ENCODE measurements at regions of chr10 and their contacts with region 1.

Region 1: GRCh38 chr10:67772894-67773511 is 65.0 kb downstream of the DNAJC12 start:
- DNase-seq: peak; percentile 19 to 85 (median 75)
- H3K4me3 ChIP-seq: no peak overlapping the region
- H3K27ac ChIP-seq: no peak overlapping the region
- H3K4me1 ChIP-seq: peaks cover 0 to 14% (median 2%) of the 10 kb centered on the region in 4 experiments
- H3K27me3 ChIP-seq: no peaks in the 10 kb centered on the region

Region 2: GRCh38 chr10:67697724-67698131 is 75.3 kb before region 1 on chr10:
- CTCF ChIA-PET with region 1: interaction called, 124 read pairs
- POLR2A ChIA-PET with region 1: no interaction called
- DNase-seq: peak; percentile 56 to 73 (median 70)
- H3K4me3 ChIP-seq: peak overlapping the region in 1 of 7 experiments; percentile 33
- H3K27ac ChIP-seq: no peak overlapping the region
- H3K4me1 ChIP-seq: peaks cover 0 to 3% (median 0%) of the 10 kb centered on the region in 4 experiments
- H3K27me3 ChIP-seq: peaks cover 0 to 6% (median 3%) of the 10 kb centered on the region in 5 experiments

Region 3: GRCh38 chr10:67988606-67989005 is 215.6 kb after region 1 on chr10:
- CTCF ChIA-PET with region 1: no interaction called
- POLR2A ChIA-PET with region 1: no interaction called
- DNase-seq: no peak
- H3K4me3 ChIP-seq: no peak overlapping the region
- H3K27ac ChIP-seq: no peak overlapping the region
- H3K4me1 ChIP-seq: no peaks in the 10 kb centered on the region
- H3K27me3 ChIP-seq: no peaks in the 10 kb centered on the region